ENCODE measurements at regions of chr3 and their contacts with region 1.

Region 1: DNA sequence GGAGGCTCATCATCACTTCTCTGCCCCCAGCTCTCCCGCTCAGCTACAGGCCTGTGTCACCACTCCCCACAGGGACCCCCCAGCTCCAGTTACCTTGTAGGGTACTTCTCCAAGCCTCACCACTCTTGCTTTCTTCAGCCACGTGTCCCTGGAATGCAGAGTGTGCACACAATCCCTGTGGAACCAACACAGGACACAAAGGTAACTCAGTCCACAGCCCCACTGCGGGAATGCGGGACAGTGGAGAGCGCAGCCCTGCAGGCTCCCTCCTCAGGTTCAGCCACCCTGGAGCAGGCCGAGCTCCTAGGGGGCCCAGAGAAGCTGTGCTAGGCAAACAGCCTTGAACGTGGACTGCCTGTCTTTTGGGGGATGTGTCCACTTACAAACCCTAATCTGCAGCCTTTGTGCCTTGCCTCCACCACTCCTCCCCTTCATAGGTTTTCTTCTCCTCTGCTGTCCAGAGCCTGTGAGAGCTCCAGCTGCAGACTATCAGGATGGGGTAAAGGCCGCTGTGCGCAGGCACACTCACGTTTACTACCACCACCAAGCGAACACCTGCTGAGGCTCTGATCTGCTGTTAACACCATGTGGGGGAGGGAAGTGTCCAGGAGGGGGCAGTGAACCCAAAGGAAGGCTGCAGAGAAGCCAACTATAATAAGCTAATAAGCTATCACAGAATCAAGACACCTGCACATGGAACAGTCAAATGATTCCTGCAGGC is 26.0 kb downstream of the XPC start:
- DNase-seq: peak in 1 of 2 experiments; percentile 41
- ATAC-seq: peak; percentile 54 to 65; a peak in 5 of 6 replicates
- H3K4me3 ChIP-seq: no peak overlapping the region
- H3K27ac ChIP-seq: no peak overlapping the region
- H3K4me1 ChIP-seq: no peaks in the 10 kb centered on the region
- CTCF ChIP-seq: no peak
- EP300 ChIP-seq: no peak
- POLR2A ChIP-seq: no peak
- RAD21 ChIP-seq: peak in 1 of 2 experiments; percentile 30; a peak in 1 of 5 replicates

Region 2: DNA sequence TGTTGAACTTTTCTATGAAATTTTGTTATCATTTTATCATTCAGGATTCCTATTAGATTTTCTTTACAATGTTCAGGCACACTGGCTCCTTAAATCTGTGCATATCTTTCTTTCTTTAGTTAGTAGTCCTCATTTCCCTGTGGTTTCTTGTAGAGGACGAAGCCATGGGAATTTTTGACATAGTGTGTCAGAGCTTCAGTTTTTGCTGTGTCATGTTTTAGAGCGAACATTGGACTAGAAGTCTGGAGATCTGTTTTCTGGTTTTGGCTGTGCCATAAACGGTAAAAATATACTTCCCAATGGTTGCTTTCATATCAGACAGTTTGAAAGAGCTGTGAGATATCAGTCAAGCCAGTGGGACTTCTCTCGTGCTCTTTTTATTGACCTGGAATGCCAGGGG is 132.9 kb before region 1 on chr3:
- CTCF ChIA-PET with region 1: no interaction called
- POLR2A ChIA-PET with region 1: no interaction called
- DNase-seq: peak in 1 of 2 experiments; percentile 19
- ATAC-seq: no peak
- H3K4me3 ChIP-seq: no peak overlapping the region
- H3K27ac ChIP-seq: no peak overlapping the region
- H3K4me1 ChIP-seq: no peaks in the 10 kb centered on the region
- CTCF ChIP-seq: no peak
- EP300 ChIP-seq: no peak
- POLR2A ChIP-seq: no peak
- RAD21 ChIP-seq: no peak

Region 3: GRCh38 chr3:14170531-14171173 is 18.2 kb after region 1 on chr3:
- CTCF ChIA-PET with region 1: interaction called, 17 read pairs
- POLR2A ChIA-PET with region 1: interaction called, 3 read pairs
- DNase-seq: no peak
- ATAC-seq: peak; percentile 52 to 77; a peak in 4 of 6 replicates
- H3K4me3 ChIP-seq: no peak overlapping the region
- H3K27ac ChIP-seq: peak overlapping the region; percentile 40 to 63; a peak in 4 of 6 replicates
- H3K4me1 ChIP-seq: peaks cover 42% of the 10 kb centered on the region
- CTCF ChIP-seq: no peak
- EP300 ChIP-seq: no peak; a peak in 1 of 5 replicates
- POLR2A ChIP-seq: no peak
- RAD21 ChIP-seq: no peak

Region 4: GRCh38 chr3:14178247-14179113 is 26.1 kb after region 1 on chr3 and contains the starts of genes LSM3 and XPC:
- CTCF ChIA-PET with region 1: interaction called, 10 read pairs
- POLR2A ChIA-PET with region 1: interaction called, 10 read pairs
- DNase-seq: peak; percentile 90 to 99
- ATAC-seq: peak; percentile 94 to 98
- H3K4me3 ChIP-seq: peak within 1 kb of the TSS; percentile 71
- H3K27ac ChIP-seq: peak within 1 kb of the TSS; percentile 95 to 97
- H3K4me1 ChIP-seq: peaks cover 41% of the 10 kb centered on the region
- CTCF ChIP-seq: no peak
- EP300 ChIP-seq: no peak
- POLR2A ChIP-seq: peak; percentile 87
- RAD21 ChIP-seq: peak in 1 of 2 experiments; percentile 23; a peak in 1 of 5 replicates
- polyA plus RNA-seq, gene LSM3: 11.8 and 23.9 TPM in 2 replicates
- polyA plus RNA-seq, gene XPC: 36.3 and 58.9 TPM in 2 replicates